ENCODE measurements at regions of chr6 and their contacts with region 1.

Region 1: GRCh38 chr6:133837801-133838349 is 51.0 kb upstream of the TCF21 start:
- DNase-seq: peak; percentile 48
- H3K4me3 Mint-ChIP-seq: peak overlapping the region; percentile 72
- H3K27ac Mint-ChIP-seq: no peak overlapping the region
- H3K4me1 Mint-ChIP-seq: peaks cover 4% of the 10 kb centered on the region
- H3K27me3 Mint-ChIP-seq: peaks cover 11% of the 10 kb centered on the region

Region 2: DNA sequence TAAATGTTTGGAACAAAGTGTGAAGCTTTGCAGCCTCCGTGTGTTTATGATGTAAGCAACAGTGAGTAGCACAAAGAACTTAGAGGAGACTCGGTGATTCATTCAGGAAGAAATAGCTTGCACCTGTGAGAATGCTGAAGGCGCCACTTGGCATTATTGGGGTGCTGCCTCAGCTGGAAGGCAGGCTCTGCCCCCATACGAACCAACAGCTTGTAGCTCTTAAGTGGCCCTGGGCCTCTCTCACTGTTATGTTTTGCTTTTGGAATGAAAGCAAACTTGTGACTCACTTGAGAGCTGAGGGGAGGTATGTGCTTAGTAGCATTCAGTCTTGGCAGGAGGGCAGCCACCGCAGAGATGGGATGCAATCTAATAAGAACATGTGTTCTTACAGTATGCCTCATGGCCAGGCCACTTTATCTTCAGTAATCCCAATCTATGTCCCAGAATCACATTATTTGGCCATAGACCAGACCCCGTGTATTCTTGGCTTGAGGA is 286.0 kb before region 1 on chr6:
- intact Hi-C with region 1: no loop called
- DNase-seq: no peak
- H3K4me3 Mint-ChIP-seq: no peak overlapping the region
- H3K27ac Mint-ChIP-seq: no peak overlapping the region
- H3K4me1 Mint-ChIP-seq: no peaks in the 10 kb centered on the region
- H3K27me3 Mint-ChIP-seq: no peaks in the 10 kb centered on the region

Region 3: GRCh38 chr6:133916650-133917151 is 78.8 kb after region 1 on chr6:
- intact Hi-C with region 1: loop called (anchors 1 kb)
- DNase-seq: peak; percentile 49
- H3K4me3 Mint-ChIP-seq: no peak overlapping the region
- H3K27ac Mint-ChIP-seq: no peak overlapping the region
- H3K4me1 Mint-ChIP-seq: peaks cover 3% of the 10 kb centered on the region
- H3K27me3 Mint-ChIP-seq: peaks cover 32% of the 10 kb centered on the region

Region 4: GRCh38 chr6:134097114-134097707 is 259.3 kb after region 1 on chr6:
- intact Hi-C with region 1: loop called (anchors 5 kb)
- DNase-seq: peak; percentile 25
- H3K4me3 Mint-ChIP-seq: no peak overlapping the region
- H3K27ac Mint-ChIP-seq: no peak overlapping the region
- H3K4me1 Mint-ChIP-seq: peaks cover 6% of the 10 kb centered on the region
- H3K27me3 Mint-ChIP-seq: peaks cover 27% of the 10 kb centered on the region